ENCODE measurements at regions of chr5 and their contacts with region 1.

Region 1: DNA sequence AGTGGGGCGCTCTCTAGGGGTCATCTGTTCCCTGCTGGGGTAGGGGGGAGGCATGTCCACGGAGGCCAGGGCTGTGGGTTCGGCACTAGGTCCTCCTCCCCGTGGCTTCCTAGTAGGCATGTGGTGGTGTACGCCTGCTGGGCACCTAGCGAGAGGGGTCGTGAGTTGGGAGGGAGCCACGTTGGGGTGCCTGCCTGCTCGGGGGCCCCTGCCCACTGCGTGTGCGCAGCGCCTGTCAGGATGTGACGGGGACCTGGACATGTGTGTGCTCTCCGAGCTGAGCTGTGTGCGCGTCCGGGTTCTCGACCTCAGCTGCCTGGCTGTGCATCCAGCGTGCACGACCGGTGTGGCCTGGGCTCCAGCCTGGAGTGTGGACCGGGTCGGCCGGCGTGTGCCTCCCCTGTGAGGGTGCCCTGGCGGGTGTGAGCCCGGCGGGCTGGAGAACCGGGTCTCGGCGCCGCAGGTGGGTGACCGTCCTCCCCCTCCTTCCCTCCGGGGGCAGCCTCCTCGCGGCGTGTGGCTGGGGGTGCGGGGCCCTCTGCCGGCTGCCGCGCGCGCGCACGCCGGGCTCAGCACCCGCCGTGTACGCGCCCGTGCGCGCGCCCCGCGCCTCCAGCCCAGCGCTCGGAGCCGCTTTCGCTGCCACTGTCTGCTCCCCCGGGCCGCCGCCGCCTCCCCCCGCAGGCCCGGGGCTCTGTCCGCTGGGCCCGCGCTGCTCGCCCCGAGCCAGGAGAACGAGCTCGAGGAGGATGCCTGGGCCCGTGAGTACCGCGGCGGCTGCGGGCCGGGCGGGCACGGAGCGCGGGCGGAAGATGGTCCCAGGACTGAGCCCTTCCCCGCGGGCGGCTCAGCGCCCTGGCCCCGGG is at the start of gene PRR7:
- DNase-seq: peak; percentile 80 to 86 (median 86)
- ATAC-seq: peak; percentile 59
- H3K4me3 ChIP-seq: peak within 1 kb of the TSS; percentile 62
- H3K27ac ChIP-seq: peak within 1 kb of the TSS; percentile 59
- H3K4me1 ChIP-seq: peaks cover 19 to 53% of the 10 kb centered on the region in 2 experiments
- H3K27me3 ChIP-seq: no peaks in the 10 kb centered on the region
- CTCF ChIP-seq: peak; percentile 11 to 32 (median 17); a peak in 2 of 6 replicates
- EP300 ChIP-seq: no peak
- POLR2A ChIP-seq: peak; percentile 74
- RAD21 ChIP-seq: peak; percentile 22; a peak in 2 of 4 replicates
- polyA plus RNA-seq, gene PRR7: not detected

Region 2: GRCh38 chr5:176436661-176437071 is 1009.8 kb before region 1 on chr5:
- CTCF ChIA-PET with region 1: no interaction called
- POLR2A ChIA-PET with region 1: no interaction called
- in situ Hi-C with region 1: no loop called
- intact Hi-C with region 1: no loop called
- DNase-seq: no peak
- ATAC-seq: peak; percentile 24; the same call in 1 of the 3 replicates
- H3K4me3 ChIP-seq: no peak overlapping the region
- H3K27ac ChIP-seq: no peak overlapping the region
- H3K4me1 ChIP-seq: peaks cover 10 to 23% of the 10 kb centered on the region in 2 experiments; a peak in 4 of 5 replicates
- H3K27me3 ChIP-seq: no peaks in the 10 kb centered on the region
- CTCF ChIP-seq: no peak
- EP300 ChIP-seq: no peak
- POLR2A ChIP-seq: no peak
- RAD21 ChIP-seq: no peak

Region 3: GRCh38 chr5:177296581-177296980 is 149.9 kb before region 1 on chr5:
- CTCF ChIA-PET with region 1: no interaction called
- POLR2A ChIA-PET with region 1: no interaction called
- in situ Hi-C with region 1: no loop called
- intact Hi-C with region 1: no loop called
- DNase-seq: no peak
- ATAC-seq: no peak
- H3K4me3 ChIP-seq: no peak overlapping the region
- H3K27ac ChIP-seq: no peak overlapping the region; the same call in 2 of the 3 replicates
- H3K4me1 ChIP-seq: peaks cover 3 to 15% of the 10 kb centered on the region in 2 experiments; a peak in 4 of 5 replicates
- H3K27me3 ChIP-seq: no peaks in the 10 kb centered on the region
- CTCF ChIP-seq: no peak
- EP300 ChIP-seq: no peak
- POLR2A ChIP-seq: no peak
- RAD21 ChIP-seq: no peak

Region 4: DNA sequence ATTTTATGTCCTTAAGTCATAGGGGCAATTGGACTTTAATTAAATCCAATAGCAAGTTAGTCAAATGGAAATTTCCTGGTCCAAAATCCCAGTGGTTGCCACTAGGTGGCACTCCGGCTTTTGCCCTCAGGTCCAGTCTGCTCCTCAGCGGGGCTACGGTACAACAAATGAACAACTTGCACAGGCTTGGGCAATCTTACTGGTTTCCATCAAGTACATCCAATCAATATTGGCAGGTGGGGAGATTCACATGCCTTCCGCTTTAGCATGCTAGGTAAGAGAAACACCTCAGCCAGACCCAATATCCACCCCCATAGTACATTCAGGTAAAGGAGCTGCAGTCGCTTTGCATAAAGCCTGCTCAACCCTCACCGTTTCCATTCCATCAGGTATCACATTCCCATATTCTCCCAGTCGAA is 128.5 kb before region 1 on chr5:
- CTCF ChIA-PET with region 1: no interaction called
- POLR2A ChIA-PET with region 1: no interaction called
- in situ Hi-C with region 1: no loop called
- intact Hi-C with region 1: loop called (anchors 1 kb)
- DNase-seq: peak; percentile 60 to 85 (median 70)
- ATAC-seq: peak; percentile 78
- H3K4me3 ChIP-seq: no peak overlapping the region
- H3K27ac ChIP-seq: no peak overlapping the region
- H3K4me1 ChIP-seq: peaks cover 4 to 33% of the 10 kb centered on the region in 2 experiments
- H3K27me3 ChIP-seq: no peaks in the 10 kb centered on the region
- CTCF ChIP-seq: peak; percentile 87 to 98 (median 94)
- EP300 ChIP-seq: no peak
- POLR2A ChIP-seq: no peak
- RAD21 ChIP-seq: peak; percentile 70 to 87

Region 5: DNA sequence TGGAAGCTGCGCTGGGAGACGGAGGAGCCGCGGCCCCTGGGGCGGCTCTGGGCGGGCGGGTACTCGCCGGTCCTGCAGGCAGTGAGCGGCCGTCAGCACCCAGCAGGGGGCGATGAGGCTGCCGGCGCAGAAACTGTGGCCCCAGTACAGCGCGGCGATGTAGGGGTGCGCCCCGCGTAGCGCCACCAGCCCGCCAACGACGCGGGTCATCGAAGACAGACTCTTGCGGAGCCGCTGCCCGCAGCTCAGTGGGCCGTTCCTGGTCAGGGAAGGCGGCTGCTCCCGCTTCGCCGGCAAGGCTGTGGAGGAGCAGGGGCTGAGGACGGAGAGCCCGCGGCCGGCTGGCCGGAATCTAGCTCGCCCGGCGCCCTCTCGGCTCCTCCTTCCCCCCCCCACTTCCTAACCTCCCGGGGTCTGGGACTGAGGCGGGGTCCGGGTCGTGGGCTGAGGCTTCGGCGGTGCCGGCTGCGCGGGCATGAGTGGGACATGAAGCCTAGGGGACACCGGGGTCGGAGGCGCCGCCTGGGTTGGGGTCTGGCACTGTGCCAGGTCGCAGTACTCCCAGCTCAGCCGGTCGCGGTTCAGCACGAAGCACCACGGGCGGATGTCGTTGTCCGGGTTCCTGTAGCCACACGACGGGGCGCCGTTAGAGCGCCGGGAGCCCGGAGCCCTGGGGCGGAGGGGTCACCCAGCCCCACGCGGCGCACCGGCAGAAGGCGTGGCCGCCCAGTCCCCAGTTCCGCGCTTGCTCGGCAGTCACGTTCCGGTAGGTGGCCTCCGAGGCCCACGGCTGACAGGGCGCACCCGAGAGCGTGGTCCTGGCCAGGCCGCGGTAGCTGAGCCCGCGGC is 42.4 kb before region 1 on chr5:
- CTCF ChIA-PET with region 1: interaction called, 9 read pairs
- POLR2A ChIA-PET with region 1: interaction called, 19 read pairs
- in situ Hi-C with region 1: no loop called
- intact Hi-C with region 1: no loop called
- DNase-seq: peak; percentile 94 to 95 (median 94)
- ATAC-seq: peak; percentile 96
- H3K4me3 ChIP-seq: peak overlapping the region; percentile 62
- H3K27ac ChIP-seq: peak overlapping the region; percentile 86
- H3K4me1 ChIP-seq: peaks cover 10 to 48% of the 10 kb centered on the region in 2 experiments
- H3K27me3 ChIP-seq: no peaks in the 10 kb centered on the region
- CTCF ChIP-seq: peak; percentile 81 to 96 (median 94)
- EP300 ChIP-seq: no peak; the same call in 1 of the 2 replicates
- POLR2A ChIP-seq: peak; percentile 77
- RAD21 ChIP-seq: peak; percentile 94 to 95